ENCODE measurements at regions of chr2 and their contacts with region 1.

Region 1: DNA sequence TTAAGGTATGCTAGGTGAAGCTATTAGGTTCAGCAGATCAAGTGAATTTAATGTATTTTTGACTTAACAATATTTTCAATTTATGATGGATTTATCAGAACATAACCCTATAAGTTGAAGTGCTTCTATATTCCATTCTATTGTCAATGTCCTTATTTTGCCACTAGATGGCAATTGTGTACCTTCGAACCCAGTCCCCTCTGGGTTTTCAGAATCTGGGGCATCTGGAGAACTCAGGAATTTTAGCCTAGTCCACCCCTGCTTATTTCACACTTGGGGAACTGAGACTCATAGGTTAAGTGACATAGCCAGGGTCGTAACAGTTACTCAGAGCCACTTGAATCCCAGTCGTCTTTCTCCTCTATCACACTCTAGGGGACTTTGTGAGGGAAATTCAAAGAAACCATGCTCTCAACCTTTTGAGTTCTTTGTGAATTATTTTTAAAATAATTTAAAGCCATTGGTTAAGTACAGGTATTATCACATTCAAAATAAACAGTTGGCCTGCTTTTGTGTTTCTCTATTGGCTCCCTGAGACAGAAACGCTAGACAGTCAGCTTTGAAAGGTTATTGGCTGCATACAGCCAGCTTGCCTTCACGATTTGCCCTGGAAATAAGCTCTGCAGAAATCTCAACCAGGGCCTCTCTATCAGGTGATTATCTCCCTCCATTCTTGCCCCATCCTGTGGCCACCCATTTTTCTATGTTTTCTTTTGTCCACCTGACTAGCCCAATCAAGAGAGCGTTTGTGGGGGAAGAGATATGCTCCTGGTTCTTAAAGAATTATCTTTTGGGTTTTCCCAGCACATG is 145.0 kb downstream of the TTC27 start:
- DNase-seq: no peak
- H3K4me3 Mint-ChIP-seq: no peak overlapping the region
- H3K27ac Mint-ChIP-seq: no peak overlapping the region
- H3K4me1 Mint-ChIP-seq: no peaks in the 10 kb centered on the region
- H3K27me3 Mint-ChIP-seq: no peaks in the 10 kb centered on the region

Region 2: DNA sequence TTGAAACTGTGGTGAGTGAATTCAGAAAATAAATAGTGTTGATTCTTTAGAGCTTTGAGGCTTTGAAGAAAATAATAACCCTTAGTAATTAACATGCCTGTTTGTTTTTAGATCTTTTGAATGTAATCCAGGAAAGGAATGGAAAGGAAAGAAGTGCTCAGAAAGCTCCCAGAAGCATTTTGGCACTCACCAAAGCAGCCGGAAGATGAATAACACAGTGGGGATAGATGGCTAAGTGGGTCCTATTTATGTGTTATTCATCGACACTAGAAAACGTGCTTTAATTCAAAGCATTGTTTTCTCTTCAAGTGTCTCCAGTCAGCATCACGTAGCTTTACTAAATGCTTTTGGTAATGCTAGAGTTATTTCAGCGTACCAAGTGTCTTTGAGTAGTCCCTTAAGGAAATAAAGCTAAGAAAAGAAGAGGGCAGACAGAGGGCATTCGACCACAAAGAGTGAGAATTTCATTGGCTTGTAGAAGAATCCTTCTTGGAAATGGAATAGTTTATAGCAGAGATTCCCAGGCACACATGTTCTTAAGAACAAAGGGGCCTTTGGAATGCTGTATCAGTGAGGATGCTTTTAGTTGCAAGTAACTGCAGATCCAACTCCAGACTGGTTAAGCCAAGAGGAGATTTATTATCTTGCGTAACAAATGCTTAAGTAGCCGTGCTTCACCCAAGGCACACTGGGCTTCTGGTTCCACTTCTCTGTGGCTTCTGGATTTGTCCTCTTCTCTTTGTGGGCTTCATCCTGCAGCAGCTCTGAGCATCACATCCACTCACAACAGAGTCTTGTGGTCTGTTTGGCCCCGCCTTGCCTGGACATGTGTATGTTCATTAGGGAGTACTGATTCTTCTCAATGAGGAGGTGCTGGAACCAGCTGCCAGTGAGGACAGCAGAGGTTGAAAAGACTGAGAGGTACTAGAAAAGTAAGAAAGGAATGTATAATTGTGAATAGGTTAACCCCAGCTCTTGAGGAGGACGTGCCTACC is 110.3 kb after region 1 on chr2:
- intact Hi-C with region 1: no loop called
- DNase-seq: no peak
- H3K4me3 Mint-ChIP-seq: no peak overlapping the region
- H3K27ac Mint-ChIP-seq: no peak overlapping the region
- H3K4me1 Mint-ChIP-seq: no peaks in the 10 kb centered on the region
- H3K27me3 Mint-ChIP-seq: peaks cover under 1% of the 10 kb centered on the region

Region 3: DNA sequence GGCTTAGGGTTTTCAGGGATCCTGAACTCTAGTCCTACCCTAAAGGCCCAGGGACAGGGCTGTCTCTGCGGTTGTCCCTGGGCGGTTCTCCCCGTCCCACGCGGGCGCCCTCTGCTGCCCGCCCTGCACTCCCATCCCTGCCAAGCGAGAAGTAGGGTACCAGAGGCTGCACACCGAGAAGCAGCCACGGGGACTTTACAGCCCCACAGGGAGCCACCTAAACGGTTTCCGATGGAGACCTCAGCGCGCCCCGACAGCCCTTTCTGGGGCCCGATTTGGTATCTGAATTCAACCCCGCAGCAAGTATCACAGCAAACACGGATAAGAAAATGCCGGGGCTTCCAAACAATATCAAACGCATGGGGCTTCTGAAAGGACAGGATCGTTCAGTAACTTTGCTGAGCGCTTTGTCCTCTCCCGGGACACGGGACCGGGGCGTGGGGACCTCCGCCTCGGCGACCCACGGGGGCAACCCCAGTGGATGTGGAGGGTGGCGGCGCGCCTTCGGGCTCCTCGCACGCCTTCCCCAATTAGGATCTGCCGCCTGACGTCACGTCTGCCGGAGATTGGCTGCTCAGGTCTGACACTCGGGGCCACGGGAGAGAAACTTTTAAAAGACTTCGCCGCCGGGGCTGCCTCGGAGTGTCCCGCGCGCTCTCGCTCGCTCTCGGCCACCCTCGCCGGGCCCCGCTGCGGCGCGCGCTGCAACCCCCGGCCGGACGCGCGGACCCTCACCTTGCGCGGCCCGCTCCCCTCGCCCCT is 173.7 kb after region 1 on chr2 and contains the start of gene LTBP1:
- intact Hi-C with region 1: loop called (anchors 2 kb)
- DNase-seq: peak; percentile 68
- H3K4me3 Mint-ChIP-seq: peak within 1 kb of the TSS; percentile 84
- H3K27ac Mint-ChIP-seq: no peak within 1 kb of the TSS
- H3K4me1 Mint-ChIP-seq: peaks cover under 1% of the 10 kb centered on the region
- H3K27me3 Mint-ChIP-seq: peaks cover 30% of the 10 kb centered on the region
- total RNA-seq, gene LTBP1: 0.12 and 0.26 TPM in 2 replicates